Endothelial cell of umbilical vein (primary cell): ENCODE measurements at regions of chr6 and their contacts with region 1.

Region 1: DNA sequence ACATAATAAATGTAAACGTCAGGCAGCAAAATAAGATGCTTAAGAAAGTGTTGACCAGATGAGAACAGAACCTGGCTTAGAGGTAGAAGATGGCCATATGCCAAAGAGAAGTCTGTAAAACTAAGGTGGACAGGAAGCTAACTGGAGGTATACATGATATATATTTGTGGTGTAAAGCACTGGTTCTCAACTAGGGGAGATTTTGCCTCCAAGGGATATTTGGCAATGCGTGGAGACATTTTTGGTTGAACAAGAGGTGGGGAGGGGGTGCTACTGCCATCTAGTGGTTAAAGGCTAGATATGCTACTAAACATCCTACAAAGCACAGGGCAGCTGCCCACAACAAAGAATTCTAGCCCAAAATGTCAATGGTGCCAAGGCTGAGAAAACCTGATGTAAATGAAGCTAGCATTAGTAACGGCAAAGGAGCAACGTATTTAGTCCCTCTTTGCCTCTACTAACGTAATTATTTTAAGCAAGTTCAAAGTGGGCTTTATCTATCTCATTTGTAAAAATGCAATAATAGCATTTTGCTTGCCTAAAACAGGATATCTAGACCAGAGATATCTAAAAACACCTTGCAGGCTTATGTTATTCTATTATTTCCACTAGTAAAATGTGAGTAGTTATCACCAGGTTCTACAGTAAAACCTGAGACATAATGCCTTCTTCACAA is 182.6 kb downstream of the RNGTT start:
- DNase-seq: peak; percentile 67
- H3K4me3 ChIP-seq: no peak overlapping the region
- H3K27ac ChIP-seq: no peak overlapping the region
- H3K4me1 ChIP-seq: no peaks in the 10 kb centered on the region
- H3K27me3 ChIP-seq: no peaks in the 10 kb centered on the region
- CTCF ChIP-seq: peak; percentile 76 to 88
- POLR2A ChIP-seq: no peak

Region 2: GRCh38 chr6:87832025-87832825 is 948.6 kb before region 1 on chr6:
- CTCF ChIA-PET with region 1: no interaction called
- POLR2A ChIA-PET with region 1: no interaction called
- dilution Hi-C with region 1: no loop called
- intact Hi-C with region 1: loop called (anchors 1 kb)
- DNase-seq: peak; percentile 64
- H3K4me3 ChIP-seq: peak overlapping the region; percentile 30 to 59 (median 33)
- H3K27ac ChIP-seq: no peak overlapping the region
- H3K4me1 ChIP-seq: no peaks in the 10 kb centered on the region
- H3K27me3 ChIP-seq: peaks cover 0 to 2% of the 10 kb centered on the region in 2 experiments
- CTCF ChIP-seq: peak; percentile 17 to 23
- POLR2A ChIP-seq: no peak

Region 3: GRCh38 chr6:88165844-88166492 is 614.9 kb before region 1 on chr6 and contains the start of gene CNR1:
- CTCF ChIA-PET with region 1: no interaction called
- POLR2A ChIA-PET with region 1: no interaction called
- dilution Hi-C with region 1: no loop called
- intact Hi-C with region 1: loop called (anchors 5 kb)
- DNase-seq: peak; percentile 24
- H3K4me3 ChIP-seq: peak within 1 kb of the TSS; percentile 29 to 58 (median 42)
- H3K27ac ChIP-seq: no peak within 1 kb of the TSS
- H3K4me1 ChIP-seq: peaks cover 12% of the 10 kb centered on the region
- H3K27me3 ChIP-seq: peaks cover 40 to 57% of the 10 kb centered on the region in 2 experiments
- CTCF ChIP-seq: no peak
- POLR2A ChIP-seq: no peak
- total RNA-seq, gene CNR1: not detected in 2 replicates

Region 4: GRCh38 chr6:88734544-88734943 is 46.3 kb before region 1 on chr6:
- CTCF ChIA-PET with region 1: no interaction called
- POLR2A ChIA-PET with region 1: no interaction called
- dilution Hi-C with region 1: no loop called
- intact Hi-C with region 1: no loop called
- DNase-seq: no peak
- H3K4me3 ChIP-seq: no peak overlapping the region
- H3K27ac ChIP-seq: no peak overlapping the region
- H3K4me1 ChIP-seq: peaks cover 6% of the 10 kb centered on the region
- H3K27me3 ChIP-seq: no peaks in the 10 kb centered on the region
- CTCF ChIP-seq: no peak
- POLR2A ChIP-seq: no peak